Sigmoid colon (tissue), 7 donors: ENCODE measurements at regions of chr11 and their contacts with region 1.

Region 1: GRCh38 chr11:111977146-111978027 is 40.2 kb downstream of the DIXDC1 start:
- DNase-seq: peak; percentile 89
- H3K4me3 ChIP-seq: peak overlapping the region; percentile 82 to 97 (median 89)
- H3K27ac ChIP-seq: peak overlapping the region; percentile 95 to 99 (median 97)
- H3K4me1 ChIP-seq: peaks cover 0 to 59% (median 46%) of the 10 kb centered on the region in 4 donors
- H3K27me3 ChIP-seq: no peaks in the 10 kb centered on the region
- CTCF ChIP-seq: no peak
- EP300 ChIP-seq: no peak
- POLR2A ChIP-seq: peak; percentile 5 to 35

Region 2: GRCh38 chr11:111776398-111777093 is 200.8 kb before region 1 on chr11:
- intact Hi-C with region 1: no loop called
- DNase-seq: no peak
- H3K4me3 ChIP-seq: no peak overlapping the region
- H3K27ac ChIP-seq: peak overlapping the region in 1 of 4 donors; percentile 6
- H3K4me1 ChIP-seq: no peaks in the 10 kb centered on the region
- H3K27me3 ChIP-seq: no peaks in the 10 kb centered on the region
- CTCF ChIP-seq: no peak
- EP300 ChIP-seq: no peak
- POLR2A ChIP-seq: no peak

Region 3: DNA sequence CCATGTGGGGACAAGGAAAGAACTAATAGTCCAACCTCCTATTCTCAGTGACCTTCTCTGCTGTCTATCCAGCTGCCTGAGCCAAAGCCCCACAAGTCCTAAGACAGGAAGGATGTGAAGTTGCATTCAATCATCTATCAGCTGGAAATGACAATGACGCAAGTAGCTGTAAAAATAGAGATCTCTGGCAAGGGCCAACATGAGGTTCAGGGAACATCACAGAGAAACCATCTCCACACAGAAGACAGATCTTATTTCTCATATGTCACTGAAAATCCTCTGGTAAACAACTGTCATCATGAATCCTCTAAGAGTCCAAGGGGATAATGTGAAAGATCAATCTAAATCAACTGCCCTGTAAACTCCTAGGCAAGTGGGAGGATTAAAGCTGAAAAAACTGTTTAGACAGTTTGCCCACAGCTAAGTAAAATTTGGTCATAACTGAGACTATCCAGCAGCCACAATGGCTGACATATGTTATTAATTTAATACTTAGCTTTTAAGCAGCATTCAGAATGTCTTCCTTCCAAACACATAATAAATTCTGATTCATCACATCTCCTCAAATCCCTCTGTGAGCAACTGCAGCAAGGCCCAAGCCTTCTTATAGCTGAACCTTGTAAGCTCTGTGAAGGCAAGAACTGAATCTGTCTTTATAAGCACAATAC is 158.1 kb before region 1 on chr11:
- intact Hi-C with region 1: no loop called
- DNase-seq: no peak
- H3K4me3 ChIP-seq: no peak overlapping the region
- H3K27ac ChIP-seq: peak overlapping the region; percentile 57 to 64 (median 60)
- H3K4me1 ChIP-seq: peaks cover 0 to 36% (median 29%) of the 10 kb centered on the region in 4 donors
- H3K27me3 ChIP-seq: no peaks in the 10 kb centered on the region
- CTCF ChIP-seq: no peak
- EP300 ChIP-seq: peak in 1 of 4 donors; percentile 20
- POLR2A ChIP-seq: no peak

Region 4: GRCh38 chr11:111833524-111833923 is 143.9 kb before region 1 on chr11:
- intact Hi-C with region 1: no loop called
- DNase-seq: no peak
- H3K4me3 ChIP-seq: no peak overlapping the region
- H3K27ac ChIP-seq: no peak overlapping the region
- H3K4me1 ChIP-seq: no peaks in the 10 kb centered on the region
- H3K27me3 ChIP-seq: no peaks in the 10 kb centered on the region
- CTCF ChIP-seq: no peak
- EP300 ChIP-seq: no peak
- POLR2A ChIP-seq: no peak

Region 5: DNA sequence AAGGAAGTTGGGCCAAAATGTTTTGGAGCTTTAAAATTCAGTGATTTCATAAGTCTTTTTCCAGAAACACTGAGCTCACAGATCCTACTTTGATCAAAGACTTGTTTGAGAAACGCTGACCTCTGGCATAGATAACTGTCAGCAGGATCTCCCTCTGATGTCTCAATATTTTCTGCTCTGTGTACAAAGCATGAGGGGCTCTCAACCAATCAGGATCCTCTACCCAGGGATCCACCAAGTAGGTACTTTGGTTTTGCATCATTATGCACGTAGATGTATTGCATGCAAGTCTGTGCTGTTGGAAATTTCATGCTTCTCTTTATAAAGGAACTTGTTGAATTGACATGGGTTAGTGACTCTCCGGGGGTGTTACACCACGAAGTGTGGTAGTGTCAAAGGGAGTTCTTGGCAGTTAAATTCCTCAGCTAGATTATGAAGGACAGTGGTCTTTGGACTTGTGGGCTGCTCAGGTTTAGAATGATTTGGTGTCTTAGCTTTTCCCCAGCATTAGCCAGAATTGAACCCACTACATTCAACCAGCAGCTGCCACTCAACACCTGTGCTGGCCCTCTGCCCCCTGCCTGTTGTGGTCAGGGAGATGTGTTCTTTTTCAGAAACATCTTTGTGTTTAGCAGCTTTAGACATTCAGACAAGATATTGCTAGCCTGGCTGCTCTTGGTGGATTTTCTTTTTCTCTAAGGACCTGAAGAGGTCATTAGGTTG is 41.9 kb before region 1 on chr11:
- intact Hi-C with region 1: loop called (anchors 2 kb)
- DNase-seq: no peak
- H3K4me3 ChIP-seq: no peak overlapping the region
- H3K27ac ChIP-seq: peak overlapping the region; percentile 72 to 89 (median 85)
- H3K4me1 ChIP-seq: peaks cover 0 to 53% (median 49%) of the 10 kb centered on the region in 4 donors
- H3K27me3 ChIP-seq: no peaks in the 10 kb centered on the region
- CTCF ChIP-seq: no peak
- EP300 ChIP-seq: no peak
- POLR2A ChIP-seq: no peak